ENCODE measurements at regions of chr1 and their contacts with region 1.

Region 1: DNA sequence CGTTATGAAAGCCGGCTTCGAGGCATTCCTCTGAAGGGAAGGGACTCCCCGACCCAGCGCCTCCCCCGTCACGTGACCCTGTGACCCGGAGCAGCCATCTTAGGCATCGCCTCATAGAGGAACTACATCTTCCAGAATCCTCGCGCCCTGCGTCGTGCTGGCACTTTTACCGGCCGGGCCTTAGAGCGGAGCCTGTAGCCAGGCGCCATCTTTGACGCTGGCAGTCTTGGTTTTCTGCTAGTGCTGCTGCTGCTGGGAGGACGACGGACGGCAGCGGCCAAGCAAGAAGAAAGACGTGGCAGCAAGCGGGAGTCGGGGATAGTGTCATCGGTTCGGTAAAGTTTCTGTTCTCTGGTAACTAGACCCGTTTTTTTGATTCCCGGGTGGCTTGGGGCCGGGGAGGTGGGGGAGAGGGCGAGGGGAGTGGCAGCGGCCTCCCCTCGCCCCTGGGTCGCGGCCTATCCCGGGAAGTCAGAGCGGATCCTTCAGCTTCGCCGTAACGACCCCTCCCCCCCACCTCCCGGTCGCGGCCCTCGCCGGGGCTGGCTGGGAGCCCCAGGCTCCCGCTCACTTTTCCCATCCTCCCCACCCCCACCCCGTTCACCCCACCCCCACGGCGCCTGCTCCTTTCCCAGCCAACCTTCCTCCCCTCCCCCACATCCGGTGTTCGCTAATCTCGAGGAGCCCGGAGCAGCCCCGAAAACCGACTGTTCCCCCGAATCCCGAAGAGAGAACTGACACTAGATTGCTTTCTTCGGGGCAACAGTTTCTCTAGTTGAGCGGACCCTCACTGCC is at the starts of genes ZBED6 and ZC3H11A:
- DNase-seq: peak; percentile 98 to 99
- ATAC-seq: peak; percentile 97 to 99 (median 98)
- H3K4me3 ChIP-seq: peak within 1 kb of the TSS; percentile 50 to 89 (median 74)
- H3K27ac ChIP-seq: peak within 1 kb of the TSS; percentile 85 to 99 (median 97)
- H3K4me1 ChIP-seq: peaks cover 11 to 49% (median 44%) of the 10 kb centered on the region in 9 donors
- H3K27me3 ChIP-seq: no peaks in the 10 kb centered on the region
- CTCF ChIP-seq: no peak
- total RNA-seq, gene ZBED6: 11.2 to 19.4 (median 12.7) TPM
- total RNA-seq, gene ZC3H11A: 37.4 to 63.8 (median 41.9) TPM

Region 2: GRCh38 chr1:203744075-203744972 is 51.3 kb before region 1 on chr1:
- intact Hi-C with region 1: loop called in 1 of 10 experiments (anchors 2 kb)
- DNase-seq: peak; percentile 29 to 66
- ATAC-seq: peak; percentile 16 to 91 (median 82)
- H3K4me3 ChIP-seq: peak overlapping the region in 2 of 10 donors; percentile 1 to 9
- H3K27ac ChIP-seq: peak overlapping the region in 5 of 10 donors; percentile 25 to 64 (median 38)
- H3K4me1 ChIP-seq: peaks cover 2 to 29% (median 24%) of the 10 kb centered on the region in 9 donors
- H3K27me3 ChIP-seq: no peaks in the 10 kb centered on the region
- CTCF ChIP-seq: no peak

Region 3: DNA sequence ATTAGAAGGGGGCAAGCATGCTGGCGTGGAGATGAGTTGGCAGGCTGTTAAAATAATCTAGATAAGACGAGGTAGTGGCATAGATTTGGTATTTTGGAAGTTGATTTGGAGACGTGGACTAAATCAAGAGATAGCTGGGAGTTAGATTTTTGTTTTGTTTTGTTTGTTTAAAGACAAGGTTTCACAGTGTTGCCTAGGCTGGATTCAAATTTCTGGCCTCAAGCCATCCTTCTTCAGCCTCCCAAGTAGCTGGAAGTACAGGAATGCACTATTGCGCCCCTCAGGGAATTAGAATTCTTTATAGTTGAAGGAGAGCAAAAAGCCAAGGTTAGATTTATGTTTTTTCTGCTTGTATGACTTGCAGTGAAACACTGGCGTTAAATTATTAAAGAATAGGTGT is 43.4 kb after region 1 on chr1:
- intact Hi-C with region 1: no loop called
- DNase-seq: no peak
- ATAC-seq: peak in 2 of 8 donors; percentile 61 to 68
- H3K4me3 ChIP-seq: no peak overlapping the region
- H3K27ac ChIP-seq: no peak overlapping the region
- H3K4me1 ChIP-seq: peaks cover 0 to 14% (median 4%) of the 10 kb centered on the region in 9 donors
- H3K27me3 ChIP-seq: no peaks in the 10 kb centered on the region
- CTCF ChIP-seq: no peak

Region 4: DNA sequence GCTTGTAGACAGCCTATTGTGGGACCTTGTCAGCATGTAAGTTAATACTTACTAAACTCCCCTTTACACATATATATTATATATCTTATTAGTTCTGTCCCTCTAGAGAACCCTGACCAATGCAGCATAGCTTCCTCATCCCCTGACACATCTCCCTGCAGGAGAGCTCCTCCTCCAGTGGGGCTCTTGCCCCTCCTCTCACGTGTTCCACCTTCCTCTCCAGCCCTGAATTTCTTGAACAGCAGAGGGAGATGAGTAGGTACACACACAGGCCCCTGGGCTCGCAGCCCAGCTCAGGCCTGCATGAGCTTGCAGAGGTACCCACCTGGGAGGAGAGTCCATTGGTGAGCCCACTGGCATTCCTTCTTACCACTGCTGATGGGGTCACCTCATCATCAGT is 445.4 kb after region 1 on chr1:
- intact Hi-C with region 1: no loop called
- DNase-seq: no peak
- ATAC-seq: no peak
- H3K4me3 ChIP-seq: no peak overlapping the region
- H3K27ac ChIP-seq: no peak overlapping the region
- H3K4me1 ChIP-seq: no peaks in the 10 kb centered on the region
- H3K27me3 ChIP-seq: no peaks in the 10 kb centered on the region
- CTCF ChIP-seq: no peak